Esophagus muscularis mucosa (tissue), 4 donors: ENCODE measurements at regions of chr16 and their contacts with region 1.

Region 1: GRCh38 chr16:75462806-75463205 is 1.7 kb downstream of the TMEM170A start:
- DNase-seq: no peak
- H3K4me3 ChIP-seq: peak overlapping the region in 1 of 4 donors; percentile 77
- H3K27ac ChIP-seq: peak overlapping the region; percentile 14 to 92 (median 61)
- H3K4me1 ChIP-seq: peaks cover 16 to 45% (median 37%) of the 10 kb centered on the region in 4 donors
- H3K27me3 ChIP-seq: peaks cover 0 to 3% (median 0%) of the 10 kb centered on the region in 4 donors
- CTCF ChIP-seq: no peak
- EP300 ChIP-seq: no peak
- POLR2A ChIP-seq: no peak

Region 2: DNA sequence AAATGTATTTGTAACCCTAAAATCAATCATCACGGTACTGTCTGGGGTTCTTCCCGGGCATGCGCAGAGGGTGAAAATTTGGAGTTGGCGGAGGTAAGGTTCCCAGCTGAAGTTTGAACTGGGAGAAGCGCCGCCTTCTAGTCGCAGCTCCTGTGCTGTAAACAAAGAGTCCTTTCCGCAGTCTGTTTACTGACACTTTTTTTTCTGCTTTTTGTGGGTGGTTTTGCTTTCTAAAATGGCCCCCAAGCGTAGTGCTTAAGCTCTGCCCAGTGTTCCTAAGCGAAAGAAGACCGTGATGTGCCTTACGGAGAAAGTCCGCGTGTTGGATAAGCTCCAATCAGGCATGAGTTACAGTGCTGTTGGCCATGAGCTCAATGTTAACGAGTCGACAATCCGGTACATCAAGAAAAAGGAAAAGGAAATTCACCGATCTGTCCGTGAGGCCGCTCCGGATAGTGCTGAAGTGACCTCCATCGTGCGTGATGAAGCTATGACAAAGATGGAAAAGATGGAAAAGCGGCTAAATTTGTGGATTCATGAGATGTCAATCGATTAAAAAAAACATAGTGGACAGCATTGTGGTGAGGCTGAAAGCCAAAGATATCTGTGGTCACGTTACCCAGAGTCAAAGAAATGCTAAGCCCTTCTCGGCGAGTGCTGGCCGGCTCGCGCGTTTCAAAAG is 28.9 kb before region 1 on chr16:
- intact Hi-C with region 1: loop called (anchors 2 kb)
- DNase-seq: peak; percentile 93
- H3K4me3 ChIP-seq: peak overlapping the region; percentile 70 to 97 (median 76)
- H3K27ac ChIP-seq: peak overlapping the region; percentile 93 to 94 (median 94)
- H3K4me1 ChIP-seq: peaks cover 15 to 39% (median 24%) of the 10 kb centered on the region in 4 donors
- H3K27me3 ChIP-seq: no peaks in the 10 kb centered on the region
- CTCF ChIP-seq: no peak
- EP300 ChIP-seq: no peak
- POLR2A ChIP-seq: no peak

Region 3: GRCh38 chr16:75506567-75506966 is 43.8 kb after region 1 on chr16:
- intact Hi-C with region 1: no loop called
- DNase-seq: no peak
- H3K4me3 ChIP-seq: no peak overlapping the region
- H3K27ac ChIP-seq: no peak overlapping the region
- H3K4me1 ChIP-seq: peaks cover 3 to 19% (median 9%) of the 10 kb centered on the region in 4 donors
- H3K27me3 ChIP-seq: no peaks in the 10 kb centered on the region
- CTCF ChIP-seq: no peak
- EP300 ChIP-seq: no peak
- POLR2A ChIP-seq: no peak